ENCODE measurements at regions of chr17 and their contacts with region 1.

Region 1: GRCh38 chr17:42677008-42677857 is 439 bp upstream of the PLEKHH3 start:
- DNase-seq: peak; percentile 92 to 99 (median 97)
- ATAC-seq: peak; percentile 85
- H3K4me3 ChIP-seq: peak overlapping the region; percentile 61
- H3K4me3 Mint-ChIP-seq: peak overlapping the region; percentile 93
- H3K27ac ChIP-seq: no peak overlapping the region
- H3K27ac Mint-ChIP-seq: peak overlapping the region; percentile 79
- H3K4me1 ChIP-seq: peaks cover 79% of the 10 kb centered on the region
- H3K4me1 Mint-ChIP-seq: peaks cover 57% of the 10 kb centered on the region
- H3K27me3 ChIP-seq: peaks cover 58 to 62% of the 10 kb centered on the region in 2 experiments
- H3K27me3 Mint-ChIP-seq: peaks cover 55% of the 10 kb centered on the region
- CTCF ChIP-seq: no peak

Region 2: DNA sequence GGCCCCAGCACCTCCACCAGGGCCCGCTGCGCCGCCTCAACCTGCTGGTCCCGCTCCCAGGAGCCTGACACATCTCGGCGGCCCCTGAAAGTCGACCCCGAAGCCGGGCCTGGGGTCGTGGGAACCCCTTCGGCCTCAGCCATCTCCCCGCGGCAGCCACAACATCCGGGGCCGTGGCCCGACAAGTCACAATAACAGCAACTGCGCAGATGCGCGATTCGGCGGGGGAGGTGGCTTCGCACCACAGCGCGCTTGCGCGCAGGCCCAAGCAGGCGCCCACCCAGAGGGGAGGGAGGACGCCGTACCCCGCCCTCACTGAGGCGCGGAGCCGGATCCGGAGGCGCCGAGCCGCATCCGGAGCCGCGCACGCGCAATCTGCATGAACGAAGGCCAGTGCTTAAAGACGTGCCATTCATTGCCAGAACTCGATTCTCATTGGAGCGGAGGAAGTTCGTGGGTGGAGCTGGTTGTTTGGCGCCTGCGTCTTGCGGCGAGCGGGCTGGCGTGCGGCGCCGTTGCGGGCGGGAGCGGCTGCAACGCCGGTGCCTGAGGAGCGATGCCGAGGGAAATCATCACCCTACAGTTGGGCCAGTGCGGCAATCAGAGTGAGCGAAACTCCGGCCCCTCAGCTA is 67.9 kb before region 1 on chr17 and contains the starts of genes RETREG3 and TUBG1:
- CTCF ChIA-PET with region 1: interaction called, 3 read pairs
- POLR2A ChIA-PET with region 1: interaction called, 21 read pairs
- intact Hi-C with region 1: loop called (anchors 1 to 2 kb)
- DNase-seq: peak; percentile 97 to 100 (median 99)
- ATAC-seq: peak; percentile 90
- H3K4me3 ChIP-seq: peak within 1 kb of the TSS; percentile 100
- H3K4me3 Mint-ChIP-seq: peak within 1 kb of the TSS; percentile 100
- H3K27ac ChIP-seq: peak within 1 kb of the TSS; percentile 92 to 96
- H3K27ac Mint-ChIP-seq: peak within 1 kb of the TSS; percentile 97
- H3K4me1 ChIP-seq: peaks cover 40% of the 10 kb centered on the region
- H3K4me1 Mint-ChIP-seq: peaks cover 51% of the 10 kb centered on the region
- H3K27me3 ChIP-seq: no peaks in the 10 kb centered on the region
- H3K27me3 Mint-ChIP-seq: no peaks in the 10 kb centered on the region
- CTCF ChIP-seq: no peak
- total RNA-seq, gene RETREG3: 46.7 to 48.7 TPM
- total RNA-seq, gene TUBG1: 7.3 to 8.5 TPM

Region 3: DNA sequence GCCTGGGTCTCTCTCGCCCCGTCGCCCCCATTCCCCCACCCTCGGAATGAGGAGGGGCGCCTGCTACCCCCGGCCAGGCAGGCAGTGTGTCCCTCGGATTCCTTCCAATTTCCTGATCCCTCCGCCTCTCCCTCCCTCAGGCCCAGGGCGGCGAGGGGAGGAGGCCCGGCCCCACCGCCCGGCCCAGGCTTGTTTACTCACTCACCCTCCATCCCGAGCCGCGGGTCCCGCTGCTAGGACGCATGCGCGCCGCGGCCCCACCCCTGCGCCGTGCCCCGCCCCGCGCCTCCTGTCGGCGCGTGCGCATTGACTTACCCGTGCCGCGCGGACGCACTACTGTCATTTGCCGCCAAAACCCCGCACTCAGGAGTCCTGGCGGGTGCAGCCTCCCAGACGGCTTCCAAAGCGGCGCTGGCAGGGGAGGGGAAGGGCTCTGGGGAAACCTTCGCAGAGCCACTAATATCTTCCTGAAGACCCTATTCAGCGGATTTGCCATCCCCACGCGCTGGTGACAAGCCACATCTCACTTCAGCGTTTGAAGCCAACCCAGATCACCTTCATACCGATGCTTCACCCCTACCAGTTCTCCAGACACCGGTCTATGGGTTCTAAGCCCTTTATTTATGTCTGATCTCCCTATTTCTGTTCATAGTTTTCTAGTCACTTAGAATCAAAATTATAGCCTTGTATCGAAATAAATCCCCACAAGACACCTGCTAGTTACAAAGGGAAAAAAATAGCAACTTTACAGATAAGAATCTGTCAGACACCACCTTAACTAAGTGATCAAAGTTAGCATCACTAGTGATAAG is 67.8 kb after region 1 on chr17 and contains the start of gene EZH1:
- CTCF ChIA-PET with region 1: no interaction called
- POLR2A ChIA-PET with region 1: no interaction called
- intact Hi-C with region 1: loop called in 1 of 2 experiments (anchors 5 kb)
- DNase-seq: peak; percentile 77 to 97 (median 92)
- ATAC-seq: peak; percentile 92
- H3K4me3 ChIP-seq: peak within 1 kb of the TSS; percentile 86
- H3K4me3 Mint-ChIP-seq: peak within 1 kb of the TSS; percentile 96
- H3K27ac ChIP-seq: peak within 1 kb of the TSS; percentile 41 to 77
- H3K27ac Mint-ChIP-seq: peak within 1 kb of the TSS; percentile 91
- H3K4me1 ChIP-seq: peaks cover 29% of the 10 kb centered on the region
- H3K4me1 Mint-ChIP-seq: peaks cover 26% of the 10 kb centered on the region
- H3K27me3 ChIP-seq: peaks cover 0 to 3% of the 10 kb centered on the region in 2 experiments
- H3K27me3 Mint-ChIP-seq: peaks cover 5% of the 10 kb centered on the region
- CTCF ChIP-seq: no peak
- total RNA-seq, gene EZH1: 73.3 to 76.1 TPM